ENCODE measurements at regions of chr1 and their contacts with region 1.

Region 1: DNA sequence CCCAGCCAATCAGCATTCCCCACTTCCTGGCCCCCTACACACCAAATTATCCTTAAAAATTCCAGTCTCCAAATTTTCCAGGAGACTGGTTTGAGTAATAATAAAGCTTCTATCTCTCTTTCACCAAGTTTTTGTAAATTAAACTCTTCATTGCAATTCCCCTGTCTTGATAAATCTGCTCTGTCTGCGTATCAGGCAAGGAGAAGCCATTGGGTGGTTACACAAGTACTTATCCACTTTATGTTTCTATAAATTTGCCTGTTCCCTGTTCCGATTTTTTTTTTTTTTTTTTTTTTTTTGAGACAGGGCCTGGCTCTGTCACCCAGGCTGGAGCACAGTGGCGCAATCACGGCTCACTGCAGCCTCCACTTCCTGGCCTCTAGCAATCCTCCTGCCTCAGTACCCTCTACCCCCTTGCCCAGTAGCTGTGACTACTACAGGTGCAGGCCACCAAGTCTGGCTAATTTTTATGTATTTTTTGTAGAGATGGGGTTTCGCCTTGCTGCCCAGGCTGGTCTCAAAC is 11.1 kb upstream of the CSRP1 start:
- DNase-seq: no peak
- ATAC-seq: no peak
- H3K4me3 ChIP-seq: no peak overlapping the region
- H3K27ac ChIP-seq: no peak overlapping the region
- H3K4me1 ChIP-seq: no peaks in the 10 kb centered on the region
- H3K27me3 ChIP-seq: no peaks in the 10 kb centered on the region
- CTCF ChIP-seq: no peak

Region 2: DNA sequence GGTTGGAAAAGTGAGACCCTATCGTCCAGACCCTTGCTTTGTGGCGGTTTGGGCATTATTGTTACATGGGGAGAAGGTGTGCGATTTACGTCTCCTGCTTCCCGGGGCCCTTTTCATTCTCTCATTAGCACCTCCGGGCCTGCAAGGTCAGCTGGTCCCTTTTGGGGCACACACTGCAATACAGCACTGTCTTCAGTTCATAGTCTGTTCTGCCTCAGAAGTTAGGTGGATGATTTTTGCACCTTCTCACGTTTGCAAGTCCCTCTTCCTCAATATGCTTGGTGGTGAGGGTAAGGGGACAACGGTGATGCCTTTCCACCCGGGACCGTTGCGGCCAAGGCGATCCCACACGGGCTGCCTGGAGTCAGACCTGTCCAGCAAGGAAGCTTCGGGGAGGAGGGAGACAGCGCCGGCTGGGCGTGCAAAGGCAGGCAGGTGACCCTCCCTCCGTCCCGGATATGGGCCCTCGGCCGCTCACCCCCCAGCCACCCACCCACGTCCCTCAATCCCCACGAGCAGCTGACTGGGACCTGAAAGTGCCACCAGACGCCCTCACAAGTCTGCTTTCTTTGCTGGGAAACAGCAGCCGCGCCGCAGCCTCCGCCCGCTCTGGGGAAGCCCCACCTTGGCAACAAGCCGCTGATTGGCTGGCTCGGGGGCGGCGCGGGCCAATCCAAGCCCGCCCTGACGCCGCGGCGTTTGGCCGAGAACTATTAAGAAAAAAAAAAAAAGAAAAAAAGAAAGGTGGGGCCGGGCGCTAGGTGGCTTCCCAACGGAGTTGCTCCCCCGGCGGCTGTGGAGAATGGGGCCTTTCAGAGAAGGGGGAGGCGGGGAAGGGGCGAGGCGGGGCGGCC is 1809.0 kb after region 1 on chr1:
- CTCF ChIA-PET with region 1: interaction called, 12 read pairs
- POLR2A ChIA-PET with region 1: no interaction called
- in situ Hi-C with region 1: no loop called
- intact Hi-C with region 1: no loop called
- DNase-seq: peak; percentile 13
- ATAC-seq: peak; percentile 99
- H3K4me3 ChIP-seq: peak overlapping the region; percentile 50 to 65
- H3K27ac ChIP-seq: peak overlapping the region; percentile 75
- H3K4me1 ChIP-seq: peaks cover 8% of the 10 kb centered on the region
- H3K27me3 ChIP-seq: peaks cover 15% of the 10 kb centered on the region
- CTCF ChIP-seq: no peak